ENCODE measurements at regions of chr17 and their contacts with region 1.

Region 1: DNA sequence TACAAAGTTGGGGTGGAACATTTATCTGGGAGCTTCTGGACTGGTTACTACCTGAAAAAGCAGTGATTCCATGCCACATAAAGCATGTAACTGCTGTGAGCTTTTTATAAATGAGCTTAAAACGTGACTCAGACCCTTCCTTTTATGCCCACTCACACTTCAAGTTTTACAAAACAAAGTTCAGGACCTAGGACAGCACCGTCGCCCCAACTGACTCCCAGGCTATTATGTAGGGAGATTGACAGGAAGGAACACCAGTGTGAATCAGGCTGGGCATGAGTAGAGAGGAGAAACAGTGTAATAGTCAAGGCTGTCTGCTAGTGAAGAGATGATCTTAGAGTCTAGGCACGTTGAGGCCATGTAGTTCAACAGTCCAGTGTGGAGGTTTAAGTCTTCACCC is 91.6 kb upstream of the DNAH9 start:
- DNase-seq: no peak
- ATAC-seq: no peak
- H3K4me3 ChIP-seq: no peak overlapping the region
- H3K27ac ChIP-seq: no peak overlapping the region
- H3K4me1 ChIP-seq: no peaks in the 10 kb centered on the region
- H3K27me3 ChIP-seq: no peaks in the 10 kb centered on the region
- CTCF ChIP-seq: no peak
- POLR2A ChIP-seq: no peak

Region 2: GRCh38 chr17:11608396-11608795 is 101.8 kb after region 1 on chr17:
- in situ Hi-C with region 1: loop called in 2 of 4 experiments (anchors 25 kb)
- intact Hi-C with region 1: no loop called
- DNase-seq: peak; percentile 16 to 27
- ATAC-seq: peak; percentile 51 to 68
- H3K4me3 ChIP-seq: no peak overlapping the region
- H3K27ac ChIP-seq: no peak overlapping the region
- H3K4me1 ChIP-seq: no peaks in the 10 kb centered on the region
- H3K27me3 ChIP-seq: no peaks in the 10 kb centered on the region
- CTCF ChIP-seq: no peak
- POLR2A ChIP-seq: no peak